Ascending aorta (tissue), 2 donors: ENCODE measurements at regions of chr6 and their contacts with region 1.

Region 1: DNA sequence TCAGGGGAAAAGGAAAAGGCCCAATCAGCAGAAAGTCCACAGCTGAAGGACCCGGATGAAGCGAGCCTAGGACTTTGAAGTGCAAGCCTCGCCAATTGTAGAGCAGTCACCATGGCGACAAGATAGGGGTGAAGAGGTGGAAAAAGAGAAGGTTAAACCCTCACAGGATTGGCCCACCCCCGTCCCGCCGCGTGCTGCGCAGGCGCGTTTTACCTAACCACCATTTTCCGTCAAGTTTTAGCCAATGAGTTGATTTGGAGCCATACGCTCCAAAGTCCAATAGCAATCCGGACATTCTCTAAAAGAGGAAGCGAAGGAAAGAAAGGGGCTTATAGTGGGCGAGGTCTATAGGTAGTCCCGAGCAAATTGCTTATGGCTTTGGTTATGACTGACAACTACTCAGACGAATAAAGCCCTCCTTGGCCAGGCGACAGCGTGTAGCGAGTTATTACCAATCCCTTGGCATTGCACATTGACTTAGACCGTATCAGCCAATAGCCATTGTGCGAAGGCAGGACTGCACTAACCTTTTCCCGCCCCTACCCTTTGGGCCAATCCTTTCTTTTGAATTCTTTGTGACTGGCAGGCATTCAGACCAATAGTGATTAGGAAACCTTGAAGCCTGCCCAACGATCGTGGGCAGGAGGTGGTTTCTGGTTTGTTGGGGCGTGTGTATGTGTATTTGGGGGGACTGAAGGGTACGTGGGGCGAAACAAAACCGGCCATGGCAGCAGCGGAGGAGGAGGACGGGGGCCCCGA is at the start of gene RNF5:
- DNase-seq: peak; percentile 96 to 99
- H3K4me3 ChIP-seq: peak within 1 kb of the TSS; percentile 73 to 99
- H3K27ac ChIP-seq: peak within 1 kb of the TSS; percentile 87 to 92
- H3K4me1 ChIP-seq: peaks cover 9 to 27% of the 10 kb centered on the region in 2 donors
- H3K27me3 ChIP-seq: no peaks in the 10 kb centered on the region
- CTCF ChIP-seq: no peak
- total RNA-seq, gene RNF5: 73.0 TPM

Region 2: GRCh38 chr6:31971993-31972708 is 205.8 kb before region 1 on chr6 and contains the start of gene DXO:
- intact Hi-C with region 1: loop called (anchors 10 kb)
- DNase-seq: peak; percentile 92 to 99
- H3K4me3 ChIP-seq: peak within 1 kb of the TSS; percentile 78 to 80
- H3K27ac ChIP-seq: peak within 1 kb of the TSS; percentile 92 to 99
- H3K4me1 ChIP-seq: peaks cover 10 to 16% of the 10 kb centered on the region in 2 donors
- H3K27me3 ChIP-seq: no peaks in the 10 kb centered on the region
- CTCF ChIP-seq: no peak
- total RNA-seq, gene DXO: 18.0 TPM

Region 3: GRCh38 chr6:32127717-32128592 is 50.0 kb before region 1 on chr6 and contains the start of gene ATF6B:
- intact Hi-C with region 1: loop called (anchors 1 kb)
- DNase-seq: peak; percentile 99 to 100
- H3K4me3 ChIP-seq: peak within 1 kb of the TSS; percentile 87 to 93
- H3K27ac ChIP-seq: peak within 1 kb of the TSS; percentile 89 to 92
- H3K4me1 ChIP-seq: peaks cover 19 to 25% of the 10 kb centered on the region in 2 donors
- H3K27me3 ChIP-seq: no peaks in the 10 kb centered on the region
- CTCF ChIP-seq: no peak
- total RNA-seq, gene ATF6B: 123 TPM

Region 4: GRCh38 chr6:32190054-32190851 is 12.3 kb after region 1 on chr6 and contains the start of gene PBX2:
- intact Hi-C with region 1: loop called (anchors 1 kb)
- DNase-seq: peak; percentile 66 to 93
- H3K4me3 ChIP-seq: peak within 1 kb of the TSS; percentile 67 to 98
- H3K27ac ChIP-seq: peak within 1 kb of the TSS; percentile 80 to 99
- H3K4me1 ChIP-seq: peaks cover 5 to 25% of the 10 kb centered on the region in 2 donors
- H3K27me3 ChIP-seq: no peaks in the 10 kb centered on the region
- CTCF ChIP-seq: no peak
- total RNA-seq, gene PBX2: 18.1 TPM

Region 5: DNA sequence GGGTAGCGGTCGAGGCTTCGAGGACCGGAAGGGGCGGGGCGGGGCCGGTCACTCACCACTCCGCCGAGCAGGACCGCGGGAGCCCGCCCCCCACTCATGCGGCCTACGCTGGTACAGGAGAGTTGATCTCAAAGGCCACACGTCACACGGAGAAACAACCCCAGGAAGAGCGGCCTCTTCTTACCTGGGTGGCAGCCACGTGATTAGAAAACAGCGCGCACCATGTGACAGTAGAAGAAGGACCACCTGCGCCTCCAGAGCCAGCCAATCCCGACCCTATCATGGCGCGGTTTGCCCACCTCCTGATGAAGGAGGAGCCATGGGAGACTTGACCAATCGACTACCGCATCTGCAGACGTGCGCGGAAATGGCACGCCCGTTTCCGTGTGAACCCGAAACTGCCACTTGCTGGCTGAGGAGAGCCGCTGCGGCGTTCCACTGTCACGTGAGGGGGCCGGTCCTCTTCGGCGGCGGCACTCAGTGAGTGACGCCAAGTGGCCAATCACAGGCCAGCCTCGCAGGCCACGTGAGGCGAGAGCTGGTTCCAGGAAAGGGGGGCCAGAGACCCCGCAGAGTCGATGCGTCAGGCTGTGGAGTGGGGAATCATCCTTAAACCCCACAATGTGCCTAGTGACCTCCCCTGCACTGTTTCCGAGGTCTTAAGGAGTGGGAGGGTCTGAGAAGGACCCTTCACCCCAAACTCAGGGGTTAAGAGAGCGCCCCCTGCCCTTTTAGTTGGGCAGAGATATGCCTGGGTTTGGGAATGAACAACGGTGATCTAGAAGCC is 1240.1 kb after region 1 on chr6 and contains the start of gene CUTA:
- intact Hi-C with region 1: loop called (anchors 5 kb)
- DNase-seq: peak; percentile 99 to 100
- H3K4me3 ChIP-seq: peak within 1 kb of the TSS; percentile 82 to 85
- H3K27ac ChIP-seq: peak within 1 kb of the TSS; percentile 95
- H3K4me1 ChIP-seq: peaks cover 13 to 30% of the 10 kb centered on the region in 2 donors
- H3K27me3 ChIP-seq: no peaks in the 10 kb centered on the region
- CTCF ChIP-seq: peak in 2 of 3 experiments; percentile 22 to 32
- total RNA-seq, gene CUTA: 77.2 TPM